ENCODE measurements at regions of chr9 and their contacts with region 1.

Region 1: DNA sequence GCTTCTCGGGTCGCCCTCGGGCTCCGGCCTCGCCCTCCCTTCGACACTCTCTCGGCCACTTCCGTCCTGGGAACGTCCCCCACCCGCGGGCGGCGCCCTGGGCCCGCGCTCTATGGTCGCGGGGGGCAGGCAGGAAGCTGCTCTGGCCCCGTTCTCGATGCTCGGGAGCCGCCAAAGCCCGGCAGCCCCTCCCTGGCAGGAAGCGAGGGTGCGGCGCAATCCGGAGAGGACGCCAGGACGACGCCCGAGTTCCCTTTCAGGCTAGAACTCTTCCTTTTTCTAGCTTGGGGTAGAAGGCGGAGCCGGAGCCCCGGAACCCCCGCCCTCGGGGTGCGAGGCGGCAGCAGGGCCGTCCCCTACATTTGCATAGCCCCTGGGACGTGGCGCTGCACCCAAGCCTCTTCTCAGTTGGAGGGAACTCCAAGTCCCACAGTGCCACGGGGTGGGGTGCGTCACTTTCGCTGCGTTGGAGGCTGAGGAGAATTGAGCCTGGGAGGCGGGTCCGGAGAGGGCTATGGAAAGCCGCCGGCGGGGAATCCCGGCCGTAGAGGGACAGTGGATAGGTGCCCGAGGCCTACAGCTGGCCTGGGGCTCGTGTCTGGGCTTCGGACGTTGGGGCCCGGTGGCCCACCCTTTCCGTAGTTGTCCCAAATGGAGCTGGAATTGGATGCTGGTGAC is at the starts of genes CREB3 and TLN1:
- DNase-seq: peak; percentile 99
- ATAC-seq: peak; percentile 94
- total RNA-seq, gene CREB3: 23.5 TPM
- total RNA-seq, gene TLN1: 255 TPM

Region 2: GRCh38 chr9:35690431-35691333 is 41.6 kb before region 1 on chr9:
- intact Hi-C with region 1: loop called (anchors 5 kb)
- DNase-seq: peak; percentile 87
- ATAC-seq: peak; percentile 69

Region 3: DNA sequence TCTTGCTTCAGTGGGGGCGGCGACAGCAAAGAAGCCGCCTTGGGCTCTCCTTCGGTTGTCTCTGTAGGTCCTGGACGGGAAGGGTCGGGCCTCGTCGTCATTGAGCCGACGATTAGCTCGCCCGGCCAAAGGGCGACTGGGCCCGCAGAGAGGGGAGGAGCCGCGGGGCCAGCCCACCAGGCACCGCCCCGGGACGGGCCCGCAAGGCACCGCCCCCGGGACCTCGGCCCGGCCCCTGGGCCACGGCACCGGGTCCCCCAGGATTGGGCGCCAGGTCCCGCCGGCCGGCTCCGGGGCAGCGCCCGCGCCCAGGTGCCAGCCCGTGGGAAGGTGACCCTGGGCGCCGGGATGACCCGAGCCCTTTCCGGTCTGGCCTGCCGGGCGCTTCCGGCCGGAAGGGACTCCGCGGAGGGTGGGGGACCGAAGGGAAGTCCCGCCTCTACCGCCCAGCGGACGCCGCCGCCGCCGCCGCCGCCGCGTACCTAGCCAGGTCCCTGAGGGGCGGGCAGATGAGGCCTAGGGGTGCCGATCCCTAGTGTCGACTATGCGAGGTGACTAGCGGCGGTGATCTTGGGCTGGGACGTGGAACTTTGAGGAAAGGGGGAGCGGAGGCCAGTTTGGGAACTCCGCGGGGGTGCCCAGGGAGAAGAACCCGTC is 16.7 kb after region 1 on chr9 and contains the starts of genes GBA2 and RGP1:
- intact Hi-C with region 1: loop called (anchors 2 kb)
- DNase-seq: peak; percentile 93
- ATAC-seq: peak; percentile 92
- total RNA-seq, gene GBA2: 80.2 TPM
- total RNA-seq, gene RGP1: 29.0 TPM

Region 4: DNA sequence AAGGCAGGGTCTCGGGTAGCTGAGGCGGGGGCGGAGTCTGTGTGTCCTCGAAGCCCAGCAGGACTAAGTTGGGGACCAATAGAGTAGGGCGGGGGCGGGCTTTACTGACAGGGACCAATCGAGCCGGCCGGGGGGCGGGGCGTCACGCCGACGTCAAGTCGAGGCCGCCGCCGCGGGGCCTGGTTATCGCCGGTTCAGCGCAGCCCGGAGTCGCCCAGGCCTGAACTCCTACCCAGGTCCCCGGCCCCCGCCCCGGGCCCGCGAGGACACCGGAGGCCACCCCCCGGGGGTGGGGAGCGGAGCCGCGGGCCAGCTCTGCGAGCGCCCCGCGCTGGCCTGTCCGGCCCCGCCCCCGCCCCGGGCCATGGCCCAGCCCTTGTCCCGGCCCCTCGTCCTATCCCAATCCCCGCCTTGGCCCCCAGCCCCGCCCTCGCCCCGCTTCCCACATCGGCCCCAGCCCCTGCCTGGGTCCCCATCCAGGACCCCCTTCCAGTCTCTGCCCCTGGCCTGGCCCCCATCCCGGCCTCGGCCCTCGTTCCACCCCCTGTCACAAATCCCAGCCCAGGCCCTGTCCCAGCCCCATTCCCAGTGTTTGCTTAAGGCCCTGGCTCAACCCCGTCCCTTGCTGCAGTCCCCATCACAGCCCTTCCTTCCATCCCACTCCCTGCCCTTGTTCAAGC is 97.0 kb after region 1 on chr9 and contains the start of gene TMEM8B:
- intact Hi-C with region 1: loop called (anchors 5 kb)
- DNase-seq: peak; percentile 99
- ATAC-seq: peak; percentile 92
- total RNA-seq, gene TMEM8B: 13.8 TPM